CD4-positive, alpha-beta memory T cell (primary cell): ENCODE measurements at regions of chr1 and their contacts with region 1.

Region 1: GRCh38 chr1:111222308-111223125 is 5.0 kb upstream of the CHI3L2 start:
- DNase-seq: peak; percentile 63 to 75 (median 68)
- H3K4me3 ChIP-seq: peak overlapping the region; percentile 25 to 39
- H3K4me3 Mint-ChIP-seq: peak overlapping the region; percentile 79 to 95 (median 85)
- H3K27ac ChIP-seq: peak overlapping the region; percentile 54
- H3K27ac Mint-ChIP-seq: peak overlapping the region; percentile 89 to 100 (median 96)
- H3K4me1 ChIP-seq: peaks cover 98% of the 10 kb centered on the region
- H3K4me1 Mint-ChIP-seq: peaks cover 76 to 97% (median 89%) of the 10 kb centered on the region in 4 donors
- H3K27me3 ChIP-seq: no peaks in the 10 kb centered on the region
- H3K27me3 Mint-ChIP-seq: no peaks in the 10 kb centered on the region

Region 2: DNA sequence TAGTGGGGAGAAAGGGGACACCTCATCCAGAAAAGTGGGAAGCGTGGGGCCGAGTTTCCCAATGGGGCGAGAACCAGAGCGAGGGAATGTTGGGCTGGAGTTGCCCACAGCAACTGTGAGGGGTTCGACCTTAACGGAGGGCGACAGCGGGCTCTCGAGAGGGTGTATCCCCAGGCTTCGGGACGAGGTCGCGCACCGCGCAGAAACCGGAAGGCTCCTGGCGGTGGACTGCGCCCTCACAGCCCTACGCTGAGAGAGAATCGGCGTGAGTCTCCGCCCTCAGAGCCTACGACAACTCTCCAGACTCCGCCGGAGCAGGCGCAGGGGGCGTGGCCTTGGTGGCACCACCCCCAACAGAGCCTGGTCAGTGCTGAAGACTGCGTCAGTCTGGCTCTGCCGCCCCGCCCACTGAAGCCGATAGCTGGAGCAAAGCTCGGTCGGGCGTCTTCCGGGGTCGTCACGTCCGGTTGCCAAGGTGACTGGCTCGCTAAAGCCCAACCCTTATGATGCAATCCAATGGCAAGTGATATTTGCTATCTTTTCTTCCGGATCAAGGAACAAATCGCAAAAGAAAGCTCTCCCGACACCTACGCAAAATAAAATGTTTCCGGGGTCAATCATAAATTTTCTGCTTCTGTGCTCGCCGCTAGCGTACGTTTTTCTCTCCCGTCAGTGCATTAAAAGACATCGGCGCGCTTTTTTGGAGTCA is 258.7 kb before region 1 on chr1 and contains the start of gene LRIF1:
- CTCF ChIA-PET with region 1: interaction called, 6 read pairs
- POLR2A ChIA-PET with region 1: no interaction called
- intact Hi-C with region 1: loop called (anchors 10 kb)
- DNase-seq: peak; percentile 98 to 100 (median 100)
- H3K4me3 ChIP-seq: peak within 1 kb of the TSS; percentile 90 to 95
- H3K4me3 Mint-ChIP-seq: peak within 1 kb of the TSS; percentile 81 to 96 (median 92)
- H3K27ac ChIP-seq: peak within 1 kb of the TSS; percentile 96
- H3K27ac Mint-ChIP-seq: peak within 1 kb of the TSS; percentile 93 to 100 (median 98)
- H3K4me1 ChIP-seq: peaks cover 31% of the 10 kb centered on the region
- H3K4me1 Mint-ChIP-seq: peaks cover 20 to 35% (median 27%) of the 10 kb centered on the region in 4 donors
- H3K27me3 ChIP-seq: peaks cover 3% of the 10 kb centered on the region
- H3K27me3 Mint-ChIP-seq: peaks cover 8 to 10% of the 10 kb centered on the region in 2 donors
- total RNA-seq, gene LRIF1: 27.0 to 28.2 TPM

Region 3: DNA sequence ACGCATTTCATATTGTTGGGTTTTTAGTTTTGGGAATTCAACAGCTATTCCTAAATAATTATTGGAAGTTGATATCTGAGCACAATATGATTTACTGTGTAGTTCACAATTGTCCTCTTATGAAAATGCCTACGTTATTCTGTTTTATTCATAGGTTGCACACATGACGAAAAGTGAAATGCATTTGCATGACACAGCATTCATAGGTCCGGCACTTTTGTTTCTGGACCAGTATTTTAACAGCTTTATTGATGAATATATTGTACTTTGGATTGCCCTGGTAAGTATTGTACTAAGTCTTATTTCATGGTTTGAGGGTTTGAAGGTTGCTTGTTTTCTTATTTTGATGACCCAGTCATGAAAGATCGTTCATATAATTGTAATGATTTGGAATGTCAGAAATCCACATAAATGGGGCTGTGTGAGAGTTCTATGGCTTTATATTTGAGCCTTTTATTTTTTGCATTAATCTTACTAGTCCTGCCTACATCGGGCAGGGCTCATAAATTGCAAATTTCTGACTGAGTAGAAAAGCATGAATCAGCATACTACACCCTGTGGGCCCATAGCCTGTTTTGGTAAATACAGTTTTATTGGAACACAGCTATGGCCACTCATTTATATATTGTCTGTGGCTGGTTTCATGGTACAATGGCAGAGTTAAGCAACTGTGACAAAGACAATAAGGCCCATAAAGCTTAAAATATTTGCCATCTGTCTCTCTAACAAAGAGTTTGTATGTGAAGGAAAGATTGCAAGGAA is 39.0 kb before region 1 on chr1:
- CTCF ChIA-PET with region 1: interaction called, 623 read pairs
- POLR2A ChIA-PET with region 1: interaction called, 55 read pairs
- intact Hi-C with region 1: loop called (anchors 5 kb)
- DNase-seq: no peak
- H3K4me3 ChIP-seq: no peak overlapping the region
- H3K4me3 Mint-ChIP-seq: no peak overlapping the region
- H3K27ac ChIP-seq: no peak overlapping the region
- H3K27ac Mint-ChIP-seq: peak overlapping the region in 6 of 7 donors; percentile 55 to 84 (median 70)
- H3K4me1 ChIP-seq: peaks cover 35% of the 10 kb centered on the region
- H3K4me1 Mint-ChIP-seq: peaks cover 47 to 78% (median 59%) of the 10 kb centered on the region in 4 donors
- H3K27me3 ChIP-seq: no peaks in the 10 kb centered on the region
- H3K27me3 Mint-ChIP-seq: no peaks in the 10 kb centered on the region

Region 4: DNA sequence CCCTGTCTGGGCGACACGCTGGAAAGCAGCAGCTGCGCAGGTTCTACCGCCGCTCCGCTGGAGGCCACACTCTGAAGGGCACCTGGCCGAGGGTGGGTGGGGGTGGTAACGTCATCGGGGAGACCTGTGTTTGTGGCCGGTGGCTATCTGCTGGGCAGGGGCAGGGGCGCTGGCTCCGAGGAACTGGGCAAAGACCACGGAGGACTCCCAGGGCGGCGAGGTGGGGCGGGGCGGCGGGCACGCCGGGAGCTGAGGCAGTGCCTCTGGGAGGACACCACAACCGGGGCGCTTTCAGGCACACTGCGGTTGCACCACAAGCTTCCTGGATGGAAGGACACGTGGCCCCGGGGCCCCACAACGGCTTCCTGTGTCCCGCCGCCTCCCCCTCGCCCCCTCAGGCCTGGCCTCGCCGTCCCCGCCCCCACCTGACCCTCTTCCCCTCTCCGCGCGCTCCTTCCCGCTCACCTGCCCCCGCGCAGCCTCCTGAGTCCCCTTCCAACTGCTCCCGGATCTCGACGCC is 18.8 kb before region 1 on chr1:
- CTCF ChIA-PET with region 1: interaction called, 623 read pairs
- POLR2A ChIA-PET with region 1: interaction called, 1,434 read pairs
- intact Hi-C with region 1: no loop called
- DNase-seq: peak; percentile 83 to 91 (median 86)
- H3K4me3 ChIP-seq: peak overlapping the region; percentile 18 to 65
- H3K4me3 Mint-ChIP-seq: peak overlapping the region; percentile 99 to 100 (median 100)
- H3K27ac ChIP-seq: peak overlapping the region; percentile 84
- H3K27ac Mint-ChIP-seq: peak overlapping the region; percentile 94 to 98 (median 98)
- H3K4me1 ChIP-seq: peaks cover 45% of the 10 kb centered on the region
- H3K4me1 Mint-ChIP-seq: peaks cover 46 to 83% (median 57%) of the 10 kb centered on the region in 4 donors
- H3K27me3 ChIP-seq: no peaks in the 10 kb centered on the region
- H3K27me3 Mint-ChIP-seq: no peaks in the 10 kb centered on the region

Region 5: DNA sequence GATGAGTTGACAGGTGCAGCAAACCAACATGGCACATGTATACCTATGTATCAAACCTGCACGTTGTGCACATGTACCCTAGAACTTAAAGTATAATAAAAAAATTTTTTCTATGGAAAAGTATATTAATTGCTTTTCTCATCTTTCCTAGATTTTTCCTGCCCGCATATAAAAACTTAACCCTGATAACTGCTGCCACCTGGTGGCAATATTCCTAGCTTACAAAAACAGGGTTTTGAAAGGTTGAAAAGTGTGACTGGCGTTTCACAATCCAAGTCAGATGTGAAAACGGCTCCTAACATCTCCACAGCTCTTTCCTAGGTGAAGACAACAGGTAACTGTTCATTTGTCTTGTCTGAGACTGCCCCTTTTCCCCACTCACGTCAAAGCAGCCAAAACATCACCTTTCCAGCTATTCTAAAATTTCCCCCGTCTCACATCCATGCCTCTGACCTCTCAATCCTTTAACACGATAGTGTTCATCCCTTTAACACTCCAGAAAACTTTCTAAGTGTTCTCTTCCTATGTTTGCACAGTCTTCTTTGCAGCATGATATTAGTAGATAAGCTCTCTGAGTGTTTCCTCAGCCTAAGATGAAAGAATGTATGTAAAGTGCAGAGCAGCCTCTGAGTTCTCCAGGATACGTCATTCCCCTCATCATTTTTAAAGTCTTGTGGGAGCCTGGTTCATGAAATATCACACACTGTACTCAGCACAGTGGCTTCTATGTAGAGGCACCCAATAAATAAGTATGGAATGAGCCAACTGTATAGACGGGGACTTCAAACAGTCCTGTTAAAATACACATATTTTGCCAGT is 177.5 kb after region 1 on chr1:
- CTCF ChIA-PET with region 1: interaction called, 89 read pairs
- POLR2A ChIA-PET with region 1: interaction called, 25 read pairs
- intact Hi-C with region 1: loop called (anchors 1 kb)
- DNase-seq: peak in 4 of 5 donors; percentile 27 to 39 (median 33)
- H3K4me3 ChIP-seq: no peak overlapping the region
- H3K4me3 Mint-ChIP-seq: peak overlapping the region in 1 of 8 donors; percentile 18
- H3K27ac ChIP-seq: no peak overlapping the region
- H3K27ac Mint-ChIP-seq: peak overlapping the region in 4 of 7 donors; percentile 18 to 55 (median 34)
- H3K4me1 ChIP-seq: peaks cover 6% of the 10 kb centered on the region
- H3K4me1 Mint-ChIP-seq: peaks cover 7 to 18% (median 13%) of the 10 kb centered on the region in 4 donors
- H3K27me3 ChIP-seq: no peaks in the 10 kb centered on the region
- H3K27me3 Mint-ChIP-seq: no peaks in the 10 kb centered on the region

Region 6: DNA sequence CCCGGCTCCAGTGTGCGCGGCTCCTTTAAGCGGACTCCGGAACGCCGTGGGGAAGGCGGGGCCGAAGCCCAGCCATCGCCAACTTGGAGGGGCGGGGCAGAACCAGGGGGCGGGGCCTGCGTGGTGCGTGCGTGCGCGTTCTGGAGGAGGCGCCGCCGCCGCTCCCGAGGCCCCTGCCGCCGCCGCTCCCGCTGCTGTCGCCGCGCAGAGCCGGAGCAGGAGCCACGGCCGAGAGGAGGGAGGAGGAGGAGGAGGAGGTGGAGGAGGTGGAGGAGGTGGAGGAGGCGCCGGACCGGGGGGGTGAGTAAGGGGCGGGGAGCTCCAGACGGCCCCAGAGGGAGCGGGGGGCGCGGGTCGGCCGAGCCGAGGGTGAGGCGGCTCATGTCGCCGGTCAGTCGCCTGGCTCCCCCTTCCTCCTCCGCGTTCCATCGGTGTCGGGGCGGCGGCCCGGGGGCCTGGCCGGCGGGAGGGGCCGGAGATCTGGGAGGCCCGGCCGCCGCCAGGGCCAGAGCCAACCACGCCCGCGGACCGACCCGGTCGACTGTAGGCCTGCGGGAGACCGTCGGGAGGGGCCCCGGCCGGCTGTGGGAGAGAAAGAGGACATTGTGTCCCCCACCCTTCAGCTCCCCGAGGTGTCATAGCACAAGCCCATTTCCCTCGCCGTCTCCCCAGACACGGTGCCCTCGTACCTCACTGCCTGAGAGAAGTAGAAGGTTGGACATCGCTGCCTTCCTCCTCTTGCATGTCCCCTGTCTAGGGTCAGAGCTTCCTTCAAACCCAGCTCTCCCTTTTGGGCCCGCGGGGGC is 397.3 kb after region 1 on chr1 and contains the start of gene RAP1A:
- CTCF ChIA-PET with region 1: no interaction called
- POLR2A ChIA-PET with region 1: no interaction called
- intact Hi-C with region 1: loop called (anchors 10 kb)
- DNase-seq: peak; percentile 88 to 91 (median 88)
- H3K4me3 ChIP-seq: peak within 1 kb of the TSS; percentile 79 to 90
- H3K4me3 Mint-ChIP-seq: peak within 1 kb of the TSS; percentile 95 to 100 (median 98)
- H3K27ac ChIP-seq: peak within 1 kb of the TSS; percentile 84
- H3K27ac Mint-ChIP-seq: peak within 1 kb of the TSS; percentile 93 to 98 (median 97)
- H3K4me1 ChIP-seq: peaks cover 81% of the 10 kb centered on the region
- H3K4me1 Mint-ChIP-seq: peaks cover 59 to 83% (median 71%) of the 10 kb centered on the region in 4 donors
- H3K27me3 ChIP-seq: no peaks in the 10 kb centered on the region
- H3K27me3 Mint-ChIP-seq: no peaks in the 10 kb centered on the region
- total RNA-seq, gene RAP1A: 130 to 134 TPM